AG04450 (cell line): ENCODE measurements at regions of chr17 and their contacts with region 1.

Region 1: GRCh38 chr17:47949136-47949759 is 7.9 kb downstream of the PNPO start:
- DNase-seq: peak; percentile 63
- H3K4me3 ChIP-seq: peak overlapping the region; percentile 39
- H3K27ac ChIP-seq: peak overlapping the region; percentile 33
- H3K27me3 ChIP-seq: no peaks in the 10 kb centered on the region
- CTCF ChIP-seq: peak; percentile 95

Region 2: GRCh38 chr17:47644324-47644723 is 304.9 kb before region 1 on chr17:
- CTCF ChIA-PET with region 1: no interaction called
- POLR2A ChIA-PET with region 1: no interaction called
- DNase-seq: no peak
- H3K4me3 ChIP-seq: no peak overlapping the region
- H3K27ac ChIP-seq: no peak overlapping the region
- H3K27me3 ChIP-seq: no peaks in the 10 kb centered on the region
- CTCF ChIP-seq: no peak

Region 3: GRCh38 chr17:47840740-47841603 is 108.3 kb before region 1 on chr17 and contains the start of gene SCRN2:
- CTCF ChIA-PET with region 1: interaction called, 10 read pairs
- POLR2A ChIA-PET with region 1: no interaction called
- DNase-seq: peak; percentile 34
- H3K4me3 ChIP-seq: peak within 1 kb of the TSS; percentile 82
- H3K27ac ChIP-seq: no peak within 1 kb of the TSS
- H3K27me3 ChIP-seq: peaks cover 14% of the 10 kb centered on the region
- CTCF ChIP-seq: peak; percentile 98
- polyA plus RNA-seq, gene SCRN2: 13.3 and 17.2 TPM in 2 replicates

Region 4: DNA sequence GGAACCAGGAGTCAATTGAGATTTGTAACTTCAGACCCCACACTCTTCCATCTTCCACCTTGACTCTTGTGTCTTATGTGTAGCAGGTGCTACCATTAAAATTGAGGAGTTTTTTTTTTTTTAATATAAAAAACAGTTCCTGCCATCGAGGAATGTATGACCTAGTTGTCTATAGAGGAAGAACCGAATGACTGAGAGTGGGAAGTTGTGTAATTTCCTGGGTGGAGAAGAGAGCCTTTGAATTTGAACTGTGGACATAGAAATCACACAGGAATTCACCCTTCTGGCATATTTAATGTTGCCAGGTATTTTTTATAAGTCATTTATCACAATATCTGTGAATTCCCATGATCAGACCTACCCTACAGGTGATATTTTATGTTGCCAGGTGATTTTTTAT is 31.2 kb before region 1 on chr17:
- CTCF ChIA-PET with region 1: interaction called, 12 read pairs
- POLR2A ChIA-PET with region 1: no interaction called
- DNase-seq: no peak
- H3K4me3 ChIP-seq: no peak overlapping the region
- H3K27ac ChIP-seq: no peak overlapping the region
- H3K27me3 ChIP-seq: no peaks in the 10 kb centered on the region
- CTCF ChIP-seq: no peak

Region 5: GRCh38 chr17:47935961-47936360 is 13.3 kb before region 1 on chr17:
- CTCF ChIA-PET with region 1: interaction called, 19 read pairs
- POLR2A ChIA-PET with region 1: no interaction called
- DNase-seq: peak; percentile 18
- H3K4me3 ChIP-seq: no peak overlapping the region
- H3K27ac ChIP-seq: no peak overlapping the region
- H3K27me3 ChIP-seq: no peaks in the 10 kb centered on the region
- CTCF ChIP-seq: no peak

Region 6: GRCh38 chr17:47978324-47978723 is 29.1 kb after region 1 on chr17:
- CTCF ChIA-PET with region 1: interaction called, 180 read pairs
- POLR2A ChIA-PET with region 1: no interaction called
- DNase-seq: peak; percentile 32
- H3K4me3 ChIP-seq: no peak overlapping the region
- H3K27ac ChIP-seq: no peak overlapping the region
- H3K27me3 ChIP-seq: no peaks in the 10 kb centered on the region
- CTCF ChIP-seq: peak; percentile 77

Region 7: GRCh38 chr17:48011405-48012150 is 62.3 kb after region 1 on chr17:
- CTCF ChIA-PET with region 1: interaction called, 125 read pairs
- POLR2A ChIA-PET with region 1: no interaction called
- DNase-seq: no peak
- H3K4me3 ChIP-seq: peak overlapping the region; percentile 54
- H3K27ac ChIP-seq: no peak overlapping the region
- H3K27me3 ChIP-seq: peaks cover 9% of the 10 kb centered on the region
- CTCF ChIP-seq: peak; percentile 59